Naive thymus-derived CD4-positive, alpha-beta T cell (primary cell): ENCODE measurements at regions of chr1 and their contacts with region 1.

Region 1: DNA sequence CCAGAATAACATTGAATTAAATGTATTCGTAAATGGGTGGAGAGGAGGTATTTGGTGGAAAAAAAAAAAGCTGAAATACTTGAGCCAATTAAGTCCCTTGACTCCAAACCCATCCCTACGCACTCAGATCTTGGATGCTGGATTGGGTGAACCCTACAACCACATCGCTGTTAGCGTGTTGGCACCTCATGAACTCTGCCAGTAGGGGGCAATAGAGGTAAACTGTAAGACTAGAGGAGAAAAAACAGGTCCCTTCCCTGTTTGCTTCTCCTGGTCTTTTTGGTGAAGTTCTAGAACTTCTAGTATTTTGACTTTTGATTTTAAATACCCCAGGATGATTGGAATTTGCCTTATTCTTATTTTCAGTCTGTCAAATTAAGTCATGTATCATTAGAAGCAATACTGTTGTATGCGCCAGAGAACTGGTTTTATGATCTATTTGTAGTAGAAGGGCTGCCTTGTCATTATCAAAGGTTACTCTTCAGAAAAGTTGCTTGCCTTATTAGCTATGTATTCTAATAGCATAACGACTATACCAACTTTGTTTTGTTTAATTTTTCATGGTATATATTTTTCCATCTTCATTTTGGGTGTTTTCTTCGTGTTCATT is 1.9 kb upstream of the OR13G1 start:
- DNase-seq: peak in 6 of 9 donors; percentile 1 to 13 (median 10)
- ATAC-seq: no peak
- H3K4me3 ChIP-seq: no peak overlapping the region
- H3K4me3 Mint-ChIP-seq: no peak overlapping the region
- H3K27ac ChIP-seq: no peak overlapping the region
- H3K27ac Mint-ChIP-seq: no peak overlapping the region
- H3K4me1 ChIP-seq: no peaks in the 10 kb centered on the region
- H3K4me1 Mint-ChIP-seq: peaks cover 0 to 3% (median 0%) of the 10 kb centered on the region in 7 donors
- H3K27me3 ChIP-seq: no peaks in the 10 kb centered on the region
- H3K27me3 Mint-ChIP-seq: peaks cover 0 to 12% (median 7%) of the 10 kb centered on the region in 5 donors

Region 2: GRCh38 chr1:247812637-247813036 is 131.2 kb after region 1 on chr1:
- CTCF ChIA-PET with region 1: no interaction called
- POLR2A ChIA-PET with region 1: no interaction called
- intact Hi-C with region 1: no loop called
- DNase-seq: no peak
- ATAC-seq: no peak
- H3K4me3 ChIP-seq: no peak overlapping the region
- H3K4me3 Mint-ChIP-seq: no peak overlapping the region
- H3K27ac ChIP-seq: no peak overlapping the region
- H3K27ac Mint-ChIP-seq: no peak overlapping the region
- H3K4me1 ChIP-seq: no peaks in the 10 kb centered on the region
- H3K4me1 Mint-ChIP-seq: no peaks in the 10 kb centered on the region
- H3K27me3 ChIP-seq: no peaks in the 10 kb centered on the region
- H3K27me3 Mint-ChIP-seq: peaks cover 0 to 8% (median 0%) of the 10 kb centered on the region in 5 donors

Region 3: DNA sequence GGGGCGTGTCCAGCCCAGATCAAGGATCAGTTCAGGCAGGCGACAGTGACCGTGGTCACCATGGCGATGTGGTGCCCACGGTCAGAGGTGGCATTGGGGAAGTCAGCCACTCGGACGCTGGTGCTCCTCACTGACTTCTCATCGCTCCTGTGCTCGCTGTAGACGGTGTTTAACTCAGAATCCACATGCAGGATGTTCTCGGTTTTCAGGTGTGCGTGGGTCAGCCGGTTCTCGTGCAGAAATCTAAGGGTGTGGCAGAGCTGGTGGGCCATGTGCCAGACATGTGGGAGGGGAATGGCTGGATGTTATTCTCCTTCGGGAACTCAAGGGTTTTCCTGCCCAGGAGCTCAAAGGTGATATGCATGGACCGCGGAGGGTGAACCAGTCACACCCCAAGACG is 255.0 kb after region 1 on chr1:
- CTCF ChIA-PET with region 1: no interaction called
- POLR2A ChIA-PET with region 1: no interaction called
- intact Hi-C with region 1: loop called in 1 of 2 experiments (anchors 10 kb)
- DNase-seq: no peak
- ATAC-seq: no peak
- H3K4me3 ChIP-seq: no peak overlapping the region
- H3K4me3 Mint-ChIP-seq: peak overlapping the region in 3 of 10 donors; percentile 5 to 88 (median 43)
- H3K27ac ChIP-seq: no peak overlapping the region
- H3K27ac Mint-ChIP-seq: peak overlapping the region in 1 of 9 donors; percentile 41
- H3K4me1 ChIP-seq: no peaks in the 10 kb centered on the region
- H3K4me1 Mint-ChIP-seq: peaks cover 0 to 15% (median 0%) of the 10 kb centered on the region in 7 donors
- H3K27me3 ChIP-seq: no peaks in the 10 kb centered on the region
- H3K27me3 Mint-ChIP-seq: peaks cover 0 to 6% (median 2%) of the 10 kb centered on the region in 5 donors